Activated CD8-positive, alpha-beta T cell treated with anti-CD3 and anti-CD28 coated beads for 36 hours (primary cell): ENCODE measurements at regions of chr16 and their contacts with region 1.

Region 1: DNA sequence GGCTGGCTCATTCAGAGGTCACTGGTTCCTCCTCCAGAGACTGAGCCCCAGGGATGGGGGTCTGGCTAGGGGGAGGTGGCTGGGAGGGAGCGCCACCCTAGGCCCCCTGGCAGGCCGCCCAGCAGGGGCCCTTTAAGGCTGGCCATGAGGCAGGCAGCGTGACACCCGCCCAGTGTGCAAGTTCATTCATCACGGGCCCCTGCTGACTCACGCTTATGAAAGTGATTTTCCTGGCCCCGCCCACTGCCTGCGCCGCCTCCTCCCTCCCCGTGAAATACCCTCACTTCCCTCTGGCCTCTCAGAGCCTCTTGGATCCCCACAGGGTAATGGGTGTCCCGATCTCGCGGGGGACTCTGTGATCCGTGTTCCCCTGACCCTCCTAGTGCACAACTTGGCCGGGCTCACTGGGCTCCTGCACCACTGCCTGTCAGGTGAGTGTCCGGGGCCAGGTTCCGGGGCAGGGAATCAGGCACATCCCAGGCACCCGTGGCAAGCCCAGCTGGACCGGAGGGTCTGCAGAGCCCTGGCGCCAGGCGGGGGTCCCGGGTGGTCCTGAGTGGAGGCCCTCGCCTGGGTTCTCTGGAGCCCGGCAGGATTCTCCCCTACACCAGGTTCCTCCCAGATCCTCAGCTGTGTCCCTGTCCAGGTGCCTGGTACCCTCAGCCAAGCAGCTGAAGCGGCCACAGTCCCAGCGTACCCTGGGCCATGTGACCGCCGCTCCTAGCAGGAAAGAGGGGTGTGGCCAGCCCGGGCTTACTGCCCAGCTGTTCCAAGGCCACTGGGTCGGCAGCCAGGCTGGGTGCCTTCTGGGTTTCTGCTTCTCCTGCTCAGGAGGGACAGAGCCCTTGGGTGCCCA is at the start of gene OSGIN1:
- DNase-seq: peak; percentile 94
- ATAC-seq: peak; percentile 94
- H3K4me3 Mint-ChIP-seq: no peak within 1 kb of the TSS
- H3K27ac Mint-ChIP-seq: peak within 1 kb of the TSS; percentile 11
- H3K4me1 Mint-ChIP-seq: peaks cover 8% of the 10 kb centered on the region
- H3K27me3 Mint-ChIP-seq: peaks cover 17% of the 10 kb centered on the region
- CTCF ChIP-seq: no peak
- total RNA-seq, gene OSGIN1: 0.56 to 0.67 TPM

Region 2: GRCh38 chr16:83801953-83802533 is 151.1 kb before region 1 on chr16:
- CTCF ChIA-PET with region 1: no interaction called
- POLR2A ChIA-PET with region 1: no interaction called
- intact Hi-C with region 1: no loop called
- DNase-seq: no peak
- ATAC-seq: no peak
- H3K4me3 Mint-ChIP-seq: no peak overlapping the region
- H3K27ac Mint-ChIP-seq: no peak overlapping the region
- H3K4me1 Mint-ChIP-seq: peaks cover 5% of the 10 kb centered on the region
- H3K27me3 Mint-ChIP-seq: peaks cover 11% of the 10 kb centered on the region
- CTCF ChIP-seq: no peak

Region 3: GRCh38 chr16:83926726-83927397 is 26.3 kb before region 1 on chr16:
- CTCF ChIA-PET with region 1: interaction called, 13 read pairs
- POLR2A ChIA-PET with region 1: no interaction called
- intact Hi-C with region 1: no loop called
- DNase-seq: peak; percentile 71
- ATAC-seq: peak; percentile 96
- H3K4me3 Mint-ChIP-seq: no peak overlapping the region
- H3K27ac Mint-ChIP-seq: no peak overlapping the region
- H3K4me1 Mint-ChIP-seq: peaks cover 2% of the 10 kb centered on the region
- H3K27me3 Mint-ChIP-seq: no peaks in the 10 kb centered on the region
- CTCF ChIP-seq: peak; percentile 98

Region 4: DNA sequence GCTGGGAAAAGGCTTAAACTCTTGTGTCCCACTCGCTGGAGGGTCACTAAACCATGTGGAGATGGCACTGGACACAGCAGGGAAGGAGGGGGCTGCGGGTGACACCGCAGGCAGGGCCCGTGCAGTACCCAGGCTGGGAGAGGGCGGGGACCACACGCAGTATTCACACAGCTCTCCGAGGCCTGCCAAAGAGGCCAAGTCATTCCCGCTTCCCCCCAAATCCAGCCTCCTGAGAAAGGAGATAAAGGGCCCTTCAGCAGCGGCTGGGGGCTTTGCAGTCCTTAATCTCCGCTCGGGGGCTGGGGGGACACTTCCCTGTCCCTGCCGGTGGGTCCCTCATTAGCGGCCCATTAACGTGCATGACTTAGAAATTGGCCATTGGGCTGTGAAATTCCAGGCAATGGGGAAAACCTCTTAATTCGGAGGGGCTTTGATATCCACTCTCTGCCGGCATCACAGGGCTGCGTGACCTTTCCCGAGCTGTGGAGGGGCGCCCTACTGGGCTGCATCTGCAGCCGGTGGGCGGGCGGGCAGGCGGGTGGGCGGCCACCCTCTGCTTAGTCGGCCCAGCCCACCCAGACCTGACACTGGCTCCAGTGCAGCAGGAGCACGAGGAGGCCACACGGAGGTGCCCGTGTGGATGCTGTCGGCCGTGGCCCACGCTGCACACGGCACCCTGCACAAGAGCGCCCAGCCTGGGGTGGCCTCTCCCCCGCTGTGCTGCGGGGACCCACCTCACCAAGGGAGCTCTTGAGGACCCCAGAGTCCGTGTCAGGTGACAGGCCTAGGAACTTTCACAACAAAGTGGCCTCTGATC is 92.0 kb after region 1 on chr16:
- CTCF ChIA-PET with region 1: interaction called, 10 read pairs
- POLR2A ChIA-PET with region 1: no interaction called
- intact Hi-C with region 1: no loop called
- DNase-seq: no peak
- ATAC-seq: no peak
- H3K4me3 Mint-ChIP-seq: no peak overlapping the region
- H3K27ac Mint-ChIP-seq: no peak overlapping the region
- H3K4me1 Mint-ChIP-seq: peaks cover 3% of the 10 kb centered on the region
- H3K27me3 Mint-ChIP-seq: peaks cover 21% of the 10 kb centered on the region
- CTCF ChIP-seq: no peak

Region 5: GRCh38 chr16:84072014-84072413 is 118.8 kb after region 1 on chr16:
- CTCF ChIA-PET with region 1: interaction called, 85 read pairs
- POLR2A ChIA-PET with region 1: interaction called, 3 read pairs
- intact Hi-C with region 1: loop called (anchors 5 kb)
- DNase-seq: no peak
- ATAC-seq: no peak
- H3K4me3 Mint-ChIP-seq: no peak overlapping the region
- H3K27ac Mint-ChIP-seq: no peak overlapping the region
- H3K4me1 Mint-ChIP-seq: no peaks in the 10 kb centered on the region
- H3K27me3 Mint-ChIP-seq: no peaks in the 10 kb centered on the region
- CTCF ChIP-seq: no peak